H1 (cell line): ENCODE measurements at regions of chr12 and their contacts with region 1.

Region 1: GRCh38 chr12:3964439-3964838 is 91.2 kb upstream of the PARP11 start:
- DNase-seq: peak; percentile 17 to 70
- H3K4me3 ChIP-seq: no peak overlapping the region
- H3K27ac ChIP-seq: no peak overlapping the region
- H3K4me1 ChIP-seq: peaks cover 0 to 2% (median 0%) of the 10 kb centered on the region in 4 experiments; a peak in 2 of 7 replicates
- H3K27me3 ChIP-seq: no peaks in the 10 kb centered on the region
- CTCF ChIP-seq: peak; percentile 68 to 72 (median 69)
- EP300 ChIP-seq: no peak
- POLR2A ChIP-seq: no peak
- RAD21 ChIP-seq: peak; percentile 79 to 87

Region 2: DNA sequence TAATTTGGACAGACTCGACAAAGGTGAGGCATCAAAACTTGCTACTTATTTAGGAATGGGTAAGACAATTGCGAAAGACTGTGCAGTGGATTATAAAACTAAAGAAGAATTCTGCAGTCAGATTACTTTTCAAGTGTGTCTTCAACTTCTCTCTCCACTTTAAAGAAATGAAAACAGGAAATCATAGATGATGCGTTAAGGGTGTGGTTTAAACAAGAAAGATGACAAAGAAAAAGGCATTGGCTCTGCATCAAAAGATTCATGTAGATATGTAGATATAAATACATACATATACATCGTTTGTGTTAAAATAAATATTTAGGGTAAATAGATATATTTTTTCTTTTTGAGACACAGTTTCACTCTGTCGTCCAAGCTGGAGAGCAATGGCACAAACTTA is 16.7 kb before region 1 on chr12:
- CTCF ChIA-PET with region 1: interaction called, 14 read pairs
- POLR2A ChIA-PET with region 1: interaction called, 4 read pairs
- DNase-seq: no peak
- H3K4me3 ChIP-seq: no peak overlapping the region
- H3K27ac ChIP-seq: no peak overlapping the region
- H3K4me1 ChIP-seq: peaks cover 0 to 14% (median 2%) of the 10 kb centered on the region in 4 experiments; a peak in 2 of 7 replicates
- H3K27me3 ChIP-seq: peaks cover 0 to 5% (median 0%) of the 10 kb centered on the region in 4 experiments; a peak in 1 of 7 replicates
- CTCF ChIP-seq: no peak
- EP300 ChIP-seq: no peak
- POLR2A ChIP-seq: no peak
- RAD21 ChIP-seq: no peak

Region 3: DNA sequence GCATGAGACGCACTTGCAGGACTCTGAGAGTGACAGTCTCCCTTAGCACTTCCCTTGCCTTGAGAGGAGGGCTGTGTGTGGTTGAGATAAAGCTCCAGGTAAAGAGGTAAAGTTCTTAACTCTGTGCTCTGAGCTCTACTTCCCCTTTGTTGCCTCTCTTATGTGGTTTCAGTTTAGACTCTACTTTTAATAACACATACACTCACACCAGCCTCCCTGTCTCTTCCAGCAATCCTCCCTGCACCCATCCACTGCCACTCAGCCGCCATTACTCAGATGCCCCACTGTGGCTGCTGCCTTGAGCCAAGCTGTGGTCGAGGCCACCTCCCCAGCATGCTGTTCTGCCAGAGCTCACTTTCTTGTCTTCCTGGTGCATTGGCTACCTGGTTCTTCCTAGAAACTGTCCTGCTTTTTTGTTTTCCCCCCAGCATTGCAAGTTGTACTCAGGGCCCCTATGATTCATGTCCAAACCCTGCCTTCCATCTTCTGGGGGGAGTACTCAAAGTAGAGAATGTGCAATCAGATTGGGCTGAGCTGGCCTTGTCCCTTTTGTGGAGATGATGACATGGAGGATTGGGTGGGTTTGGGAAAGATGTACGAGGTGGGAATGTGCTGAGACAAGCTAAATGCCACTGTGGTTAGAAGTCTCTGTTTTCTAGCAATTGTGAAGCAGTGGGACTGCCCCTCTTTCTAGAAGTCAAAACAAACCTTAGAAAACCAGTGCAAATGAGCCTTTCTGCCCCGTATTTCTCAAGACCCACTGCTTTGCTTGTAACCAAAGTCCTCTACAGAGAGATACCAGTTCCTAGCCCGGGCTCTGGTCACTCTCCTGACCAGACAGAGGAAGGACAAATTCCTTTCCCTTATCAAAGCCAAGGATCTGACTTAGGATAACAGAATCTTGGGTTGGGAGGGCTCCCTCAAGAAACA is 24.3 kb after region 1 on chr12:
- CTCF ChIA-PET with region 1: interaction called, 33 read pairs
- POLR2A ChIA-PET with region 1: no interaction called
- DNase-seq: no peak
- H3K4me3 ChIP-seq: no peak overlapping the region
- H3K27ac ChIP-seq: no peak overlapping the region
- H3K4me1 ChIP-seq: no peaks in the 10 kb centered on the region; a peak in 1 of 7 replicates
- H3K27me3 ChIP-seq: no peaks in the 10 kb centered on the region
- CTCF ChIP-seq: no peak
- EP300 ChIP-seq: no peak
- POLR2A ChIP-seq: no peak
- RAD21 ChIP-seq: no peak

Region 4: DNA sequence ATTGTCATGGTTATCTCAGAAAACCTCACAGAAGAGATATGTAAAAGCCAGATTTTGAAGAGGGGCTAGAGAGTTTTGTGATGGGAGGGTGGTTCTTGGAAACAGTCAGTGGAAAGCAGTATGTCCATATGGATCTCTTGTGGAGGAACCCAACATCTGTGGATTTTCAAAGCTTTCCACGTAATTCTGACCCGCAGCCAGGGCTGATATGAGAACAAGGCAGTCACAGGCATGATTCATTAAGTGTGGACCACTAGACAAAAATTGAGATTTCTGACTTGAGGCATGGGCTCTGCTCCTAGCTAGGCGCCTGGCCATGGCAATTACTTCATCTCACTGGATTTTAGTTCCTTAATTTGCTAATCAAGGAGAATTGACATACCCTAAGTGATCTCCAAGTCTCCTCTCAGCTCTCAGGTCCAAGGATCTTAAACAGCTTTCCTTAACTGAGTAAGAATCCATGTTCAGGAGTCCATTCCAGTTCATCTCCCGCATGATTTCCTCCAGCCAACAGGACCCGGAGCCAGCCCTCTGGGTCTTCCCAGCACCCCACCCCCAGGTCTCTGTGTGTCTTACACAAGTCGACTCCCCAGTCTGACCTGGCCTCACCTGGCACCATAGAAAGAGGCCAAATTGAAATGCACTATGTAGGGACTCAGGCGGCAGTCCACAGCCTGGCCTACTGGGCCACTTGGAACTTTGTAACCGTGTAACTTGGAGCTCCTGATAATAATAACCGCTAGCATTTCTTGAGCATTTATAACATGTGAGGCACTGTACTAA is 85.0 kb after region 1 on chr12:
- CTCF ChIA-PET with region 1: interaction called, 11 read pairs
- POLR2A ChIA-PET with region 1: no interaction called
- DNase-seq: peak in 1 of 2 experiments; percentile 33
- H3K4me3 ChIP-seq: no peak overlapping the region
- H3K27ac ChIP-seq: no peak overlapping the region
- H3K4me1 ChIP-seq: peaks cover 0 to 8% (median under 1%) of the 10 kb centered on the region in 4 experiments; a peak in 2 of 7 replicates
- H3K27me3 ChIP-seq: no peaks in the 10 kb centered on the region; a peak in 1 of 7 replicates
- CTCF ChIP-seq: no peak
- EP300 ChIP-seq: no peak
- POLR2A ChIP-seq: no peak
- RAD21 ChIP-seq: no peak